Panc1 (cell line): ENCODE measurements at regions of chr2 and their contacts with region 1.

Region 1: GRCh38 chr2:180349809-180350208 is 342.7 kb upstream of the CWC22 start:
- DNase-seq: no peak
- ATAC-seq: no peak
- H3K4me3 ChIP-seq: no peak overlapping the region
- H3K27ac ChIP-seq: no peak overlapping the region
- H3K4me1 ChIP-seq: no peaks in the 10 kb centered on the region
- H3K27me3 ChIP-seq: no peaks in the 10 kb centered on the region
- CTCF ChIP-seq: no peak

Region 2: DNA sequence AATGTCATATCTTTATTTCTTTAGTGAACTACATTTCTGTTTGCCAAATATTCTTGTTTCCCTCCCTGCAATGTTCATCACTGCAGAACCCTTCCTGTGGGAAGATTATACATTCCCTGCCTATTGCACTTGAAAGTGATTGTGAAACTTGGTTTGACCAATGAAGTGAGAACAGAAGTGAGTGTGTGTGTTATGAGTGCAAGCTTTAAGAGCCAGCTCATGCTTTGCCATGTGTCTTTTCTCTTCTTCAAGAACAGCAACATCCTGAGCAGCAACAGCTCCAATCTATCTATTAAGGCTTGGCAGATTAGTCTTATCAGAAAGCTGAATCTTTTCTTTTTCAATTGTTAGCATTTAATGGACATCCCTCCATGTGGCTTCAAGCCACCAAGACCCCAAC is 588.6 kb after region 1 on chr2:
- CTCF ChIA-PET with region 1: no interaction called
- POLR2A ChIA-PET with region 1: interaction called, 14 read pairs
- in situ Hi-C with region 1: no loop called
- intact Hi-C with region 1: no loop called
- DNase-seq: no peak
- ATAC-seq: no peak
- H3K4me3 ChIP-seq: no peak overlapping the region
- H3K27ac ChIP-seq: no peak overlapping the region
- H3K4me1 ChIP-seq: no peaks in the 10 kb centered on the region
- H3K27me3 ChIP-seq: no peaks in the 10 kb centered on the region
- CTCF ChIP-seq: no peak